Calu3 (cell line): ENCODE measurements at regions of chr10 and their contacts with region 1.

Region 1: DNA sequence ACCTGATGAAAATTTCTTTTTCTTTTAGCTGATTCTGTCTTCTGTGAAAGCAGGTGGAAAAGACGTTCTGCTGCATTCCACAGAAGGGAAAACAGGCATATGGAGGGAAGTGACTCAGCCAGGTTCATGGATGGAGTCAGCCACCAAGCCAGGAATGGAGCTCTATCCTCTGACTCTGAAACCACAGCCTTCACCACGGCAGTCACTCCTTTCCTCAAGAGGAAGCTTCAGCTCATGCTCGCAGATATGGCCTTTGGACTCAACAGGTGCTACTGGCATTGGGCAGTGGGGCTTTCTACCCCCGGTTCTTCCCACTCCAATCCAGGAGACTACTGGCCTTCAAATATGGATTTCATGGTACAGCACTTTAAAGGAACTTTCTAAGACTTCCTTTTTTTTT is 11.5 kb upstream of the PLAU start:
- DNase-seq: peak; percentile 86
- H3K4me3 Mint-ChIP-seq: peak overlapping the region; percentile 36
- H3K27ac Mint-ChIP-seq: peak overlapping the region; percentile 96
- H3K4me1 Mint-ChIP-seq: peaks cover 53% of the 10 kb centered on the region
- H3K27me3 Mint-ChIP-seq: no peaks in the 10 kb centered on the region
- CTCF ChIP-seq: no peak

Region 2: DNA sequence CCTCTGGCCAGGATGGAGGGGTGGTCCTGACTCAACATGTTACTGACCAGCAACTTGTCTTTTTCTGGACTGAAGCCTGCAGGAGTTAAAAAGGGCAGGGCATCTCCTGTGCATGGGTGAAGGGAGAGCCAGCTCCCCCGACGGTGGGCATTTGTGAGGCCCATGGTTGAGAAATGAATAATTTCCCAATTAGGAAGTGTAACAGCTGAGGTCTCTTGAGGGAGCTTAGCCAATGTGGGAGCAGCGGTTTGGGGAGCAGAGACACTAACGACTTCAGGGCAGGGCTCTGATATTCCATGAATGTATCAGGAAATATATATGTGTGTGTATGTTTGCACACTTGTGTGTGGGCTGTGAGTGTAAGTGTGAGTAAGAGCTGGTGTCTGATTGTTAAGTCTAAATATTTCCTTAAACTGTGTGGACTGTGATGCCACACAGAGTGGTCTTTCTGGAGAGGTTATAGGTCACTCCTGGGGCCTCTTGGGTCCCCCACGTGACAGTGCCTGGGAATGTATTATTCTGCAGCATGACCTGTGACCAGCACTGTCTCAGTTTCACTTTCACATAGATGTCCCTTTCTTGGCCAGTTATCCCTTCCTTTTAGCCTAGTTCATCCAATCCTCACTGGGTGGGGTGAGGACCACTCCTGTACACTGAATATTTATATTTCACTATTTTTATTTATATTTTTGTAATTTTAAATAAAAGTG is 17.5 kb after region 1 on chr10:
- CTCF ChIA-PET with region 1: interaction called, 13 read pairs
- intact Hi-C with region 1: no loop called
- DNase-seq: no peak
- H3K4me3 Mint-ChIP-seq: peak overlapping the region; percentile 100
- H3K27ac Mint-ChIP-seq: peak overlapping the region; percentile 100
- H3K4me1 Mint-ChIP-seq: peaks cover 56% of the 10 kb centered on the region
- H3K27me3 Mint-ChIP-seq: no peaks in the 10 kb centered on the region
- CTCF ChIP-seq: no peak

Region 3: DNA sequence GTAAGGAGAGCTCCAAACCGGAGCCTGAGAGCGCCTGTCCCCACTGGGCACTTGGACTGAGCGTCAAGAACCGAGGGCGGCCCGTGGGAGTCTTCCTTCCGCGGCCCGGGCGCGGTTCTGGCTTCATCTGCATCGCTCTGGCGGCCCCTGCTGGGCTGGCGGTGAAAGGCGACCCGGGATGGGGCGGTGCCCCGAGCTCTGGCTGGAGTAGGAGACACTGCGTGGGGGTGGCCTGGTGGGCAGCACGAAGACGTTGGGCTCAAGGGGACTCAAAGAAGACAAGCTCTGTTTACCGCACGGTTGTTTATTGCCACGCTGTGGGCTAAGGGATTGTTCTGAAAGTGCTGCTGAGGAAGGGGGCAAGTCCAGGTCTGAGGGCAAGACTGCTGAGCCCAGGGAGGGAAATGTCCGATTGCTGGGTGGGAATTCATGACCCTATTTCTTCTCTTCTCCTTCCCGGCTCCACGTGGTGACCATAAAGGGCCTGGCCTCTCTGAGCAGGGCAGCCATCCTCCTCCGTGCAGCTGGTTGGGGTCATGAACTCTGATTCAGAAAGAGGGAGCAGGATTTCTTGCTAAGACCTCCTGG is 41.3 kb after region 1 on chr10:
- CTCF ChIA-PET with region 1: interaction called, 14 read pairs
- intact Hi-C with region 1: no loop called
- DNase-seq: peak; percentile 96
- H3K4me3 Mint-ChIP-seq: peak overlapping the region; percentile 62
- H3K27ac Mint-ChIP-seq: peak overlapping the region; percentile 82
- H3K4me1 Mint-ChIP-seq: peaks cover 39% of the 10 kb centered on the region
- H3K27me3 Mint-ChIP-seq: no peaks in the 10 kb centered on the region
- CTCF ChIP-seq: peak; percentile 97

Region 4: DNA sequence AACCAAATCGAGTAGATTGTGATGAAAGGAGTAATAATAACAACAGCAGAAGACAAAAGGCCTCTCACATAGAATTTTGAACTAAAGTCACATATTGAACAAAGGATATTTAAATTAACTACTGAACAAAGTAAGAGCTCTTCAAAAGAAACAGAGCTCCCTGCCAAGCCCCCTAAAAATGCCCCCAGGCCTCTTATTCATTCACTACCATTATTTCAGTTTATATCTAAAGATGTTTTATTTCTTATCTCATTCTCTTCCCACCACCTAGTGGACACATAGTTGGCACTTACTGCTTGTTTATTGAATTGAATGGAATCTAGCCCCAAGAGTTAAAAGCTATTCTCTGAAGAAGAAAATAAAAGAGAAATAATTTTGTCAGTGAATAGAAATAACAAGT is 135.9 kb after region 1 on chr10:
- CTCF ChIA-PET with region 1: no interaction called
- intact Hi-C with region 1: no loop called
- DNase-seq: no peak
- H3K4me3 Mint-ChIP-seq: no peak overlapping the region
- H3K27ac Mint-ChIP-seq: no peak overlapping the region
- H3K4me1 Mint-ChIP-seq: peaks cover 53% of the 10 kb centered on the region
- H3K27me3 Mint-ChIP-seq: no peaks in the 10 kb centered on the region
- CTCF ChIP-seq: no peak